ENCODE measurements at regions of chr18 and their contacts with region 1.

Region 1: DNA sequence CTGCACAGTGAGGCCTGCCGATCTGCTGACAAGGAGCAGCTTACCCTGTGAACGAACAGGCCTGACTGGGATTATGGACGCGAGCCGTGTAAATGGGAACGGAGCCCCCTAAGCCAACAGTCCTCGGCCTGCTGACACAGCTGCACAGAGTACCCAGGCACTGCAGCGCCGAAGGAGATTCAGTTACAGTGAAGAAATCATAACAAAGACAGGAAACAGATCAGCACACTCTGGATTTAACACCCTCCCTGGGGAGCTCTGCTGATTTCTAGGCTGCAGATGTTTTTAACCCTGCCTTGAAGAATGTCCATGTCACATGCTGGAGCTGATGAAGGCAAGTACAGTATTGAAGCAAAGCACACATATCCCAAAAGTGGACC is 43.4 kb downstream of the COLEC12 start:
- DNase-seq: peak; percentile 43 to 77
- ATAC-seq: peak; percentile 83 to 93 (median 89)
- H3K4me3 ChIP-seq: peak overlapping the region in 7 of 10 donors; percentile 0 to 35 (median 27)
- H3K27ac ChIP-seq: peak overlapping the region; percentile 64 to 82 (median 70)
- H3K4me1 ChIP-seq: peaks cover 2 to 64% (median 28%) of the 10 kb centered on the region in 9 donors
- H3K27me3 ChIP-seq: peaks cover 0 to 10% (median 0%) of the 10 kb centered on the region in 7 donors
- CTCF ChIP-seq: no peak

Region 2: GRCh38 chr18:240175-240574 is 217.0 kb before region 1 on chr18:
- intact Hi-C with region 1: no loop called
- DNase-seq: no peak
- ATAC-seq: peak; percentile 80 to 98 (median 92)
- H3K4me3 ChIP-seq: no peak overlapping the region
- H3K27ac ChIP-seq: peak overlapping the region in 8 of 10 donors; percentile 43 to 83 (median 77)
- H3K4me1 ChIP-seq: peaks cover 0 to 19% (median 0%) of the 10 kb centered on the region in 9 donors
- H3K27me3 ChIP-seq: no peaks in the 10 kb centered on the region
- CTCF ChIP-seq: no peak

Region 3: DNA sequence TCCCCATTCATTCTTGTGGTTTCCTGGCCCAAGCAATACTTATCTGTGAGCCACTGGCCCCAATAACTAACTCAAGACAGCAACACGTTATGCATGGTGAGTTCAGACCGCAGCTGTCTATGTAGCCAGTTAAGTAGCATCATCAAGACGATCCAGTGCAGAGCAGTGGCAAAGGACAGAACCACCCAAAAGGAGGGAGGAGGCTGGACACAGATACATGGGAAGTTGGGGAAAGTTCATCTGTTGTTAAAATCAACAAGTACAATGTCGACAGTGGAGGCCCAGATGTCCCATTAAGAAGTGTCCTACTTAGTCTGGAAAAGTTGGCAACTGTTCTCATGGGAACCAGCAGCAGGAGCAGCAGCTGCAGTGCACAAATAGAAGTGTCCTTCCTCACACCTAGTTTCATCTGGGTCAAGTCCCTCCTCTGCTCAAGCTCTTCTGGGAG is 82.4 kb before region 1 on chr18:
- intact Hi-C with region 1: loop called in 1 of 10 experiments (anchors 10 kb)
- DNase-seq: no peak
- ATAC-seq: peak in 6 of 8 donors; percentile 38 to 55 (median 46)
- H3K4me3 ChIP-seq: no peak overlapping the region
- H3K27ac ChIP-seq: peak overlapping the region in 5 of 10 donors; percentile 19 to 60 (median 40)
- H3K4me1 ChIP-seq: peaks cover 9 to 82% (median 53%) of the 10 kb centered on the region in 9 donors
- H3K27me3 ChIP-seq: no peaks in the 10 kb centered on the region
- CTCF ChIP-seq: no peak

Region 4: DNA sequence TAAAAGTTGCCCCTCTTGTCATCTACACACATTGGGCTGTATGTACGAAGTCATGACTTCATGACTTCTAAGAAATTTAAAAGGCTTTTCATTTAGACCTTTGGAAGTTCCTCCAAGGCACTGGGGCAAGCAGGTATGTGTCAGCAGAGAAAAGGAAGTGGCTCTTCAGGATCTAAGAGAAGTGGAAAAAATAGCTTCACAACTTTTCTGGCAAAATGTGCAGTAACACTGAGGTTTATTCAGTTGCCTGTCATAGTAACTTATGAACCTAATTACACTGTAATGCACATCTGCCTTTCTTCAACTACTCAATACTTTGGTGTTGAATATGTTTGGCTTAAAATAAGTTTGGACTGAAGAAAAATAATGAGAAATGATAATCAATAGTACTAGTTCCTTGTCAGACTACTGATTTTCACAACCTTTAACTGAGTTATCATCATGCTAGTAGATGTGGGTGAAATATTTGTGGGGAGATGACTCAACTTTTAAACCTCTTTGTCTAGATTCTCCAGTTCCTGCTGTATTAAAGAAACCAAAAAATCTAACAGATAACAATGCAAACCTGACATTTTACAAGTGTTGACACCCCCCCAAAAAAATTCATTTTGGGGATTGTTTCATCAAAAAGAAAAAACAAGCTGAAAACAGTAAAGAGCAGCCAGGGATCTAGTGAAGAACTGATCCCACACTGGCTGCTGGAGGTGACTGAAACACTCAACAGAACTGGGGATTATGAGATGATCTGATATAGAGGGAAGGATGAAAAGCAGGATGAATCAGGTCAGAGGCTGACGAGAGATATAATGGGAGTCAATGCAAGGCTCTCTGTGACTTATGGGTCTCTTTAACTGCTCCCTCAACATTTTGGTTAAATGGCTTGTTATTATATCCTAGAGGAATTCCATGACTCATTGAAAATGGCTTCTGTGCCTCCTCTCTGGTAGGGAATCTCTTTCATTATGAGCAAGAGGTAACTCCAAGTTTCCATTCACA is 41.2 kb before region 1 on chr18:
- intact Hi-C with region 1: loop called in 1 of 10 experiments (anchors 5 kb)
- DNase-seq: no peak
- ATAC-seq: no peak
- H3K4me3 ChIP-seq: no peak overlapping the region
- H3K27ac ChIP-seq: peak overlapping the region in 1 of 10 donors; percentile 12
- H3K4me1 ChIP-seq: peaks cover 0 to 34% (median 3%) of the 10 kb centered on the region in 9 donors
- H3K27me3 ChIP-seq: no peaks in the 10 kb centered on the region
- CTCF ChIP-seq: no peak

Measured in heart right ventricle (tissue), 16 donors.